ENCODE measurements at regions of chr19 and their contacts with region 1.

Region 1: GRCh38 chr19:36876993-36877938 is 26.6 kb downstream of the ZNF345 start:
- DNase-seq: no peak
- ATAC-seq: no peak
- H3K4me3 ChIP-seq: no peak overlapping the region
- H3K27ac ChIP-seq: no peak overlapping the region
- H3K4me1 ChIP-seq: no peaks in the 10 kb centered on the region
- H3K27me3 ChIP-seq: no peaks in the 10 kb centered on the region
- CTCF ChIP-seq: no peak
- POLR2A ChIP-seq: no peak

Region 2: GRCh38 chr19:36638862-36639510 is 238.3 kb before region 1 on chr19:
- intact Hi-C with region 1: loop called in 2 of 10 experiments (anchors 10 kb)
- DNase-seq: no peak
- ATAC-seq: no peak
- H3K4me3 ChIP-seq: no peak overlapping the region
- H3K27ac ChIP-seq: no peak overlapping the region
- H3K4me1 ChIP-seq: no peaks in the 10 kb centered on the region
- H3K27me3 ChIP-seq: no peaks in the 10 kb centered on the region
- CTCF ChIP-seq: no peak
- POLR2A ChIP-seq: no peak

Region 3: GRCh38 chr19:36646746-36647145 is 230.5 kb before region 1 on chr19:
- intact Hi-C with region 1: loop called in 1 of 10 experiments (anchors 10 kb)
- DNase-seq: no peak
- ATAC-seq: no peak
- H3K4me3 ChIP-seq: no peak overlapping the region
- H3K27ac ChIP-seq: no peak overlapping the region
- H3K4me1 ChIP-seq: no peaks in the 10 kb centered on the region
- H3K27me3 ChIP-seq: no peaks in the 10 kb centered on the region
- CTCF ChIP-seq: no peak
- POLR2A ChIP-seq: no peak

Region 4: DNA sequence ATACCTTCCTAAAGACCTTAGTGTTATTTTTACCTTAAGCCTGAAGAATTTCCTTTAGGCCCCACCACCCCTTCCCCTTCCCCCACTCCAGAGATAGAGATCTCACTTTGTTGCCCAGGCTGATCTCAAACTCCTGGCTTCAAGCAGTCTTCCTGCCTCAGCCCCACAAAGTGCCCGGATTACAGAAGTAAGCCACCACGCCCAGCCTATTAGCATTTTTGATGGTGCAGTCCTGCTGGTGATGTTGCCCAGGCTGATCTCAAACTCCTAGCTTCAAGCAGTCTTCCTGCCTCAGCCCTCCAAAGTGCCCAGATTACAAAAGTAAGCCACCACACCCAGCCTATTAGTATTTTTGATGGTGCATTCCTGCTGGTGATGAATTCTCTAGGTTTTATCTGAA is 167.8 kb before region 1 on chr19:
- intact Hi-C with region 1: no loop called
- DNase-seq: no peak
- ATAC-seq: no peak
- H3K4me3 ChIP-seq: no peak overlapping the region
- H3K27ac ChIP-seq: no peak overlapping the region
- H3K4me1 ChIP-seq: no peaks in the 10 kb centered on the region
- H3K27me3 ChIP-seq: no peaks in the 10 kb centered on the region
- CTCF ChIP-seq: no peak
- POLR2A ChIP-seq: no peak

Region 5: GRCh38 chr19:36719687-36720556 is 157.3 kb before region 1 on chr19:
- intact Hi-C with region 1: loop called in 1 of 10 experiments (anchors 10 kb)
- DNase-seq: no peak
- ATAC-seq: no peak
- H3K4me3 ChIP-seq: no peak overlapping the region
- H3K27ac ChIP-seq: no peak overlapping the region
- H3K4me1 ChIP-seq: no peaks in the 10 kb centered on the region
- H3K27me3 ChIP-seq: no peaks in the 10 kb centered on the region
- CTCF ChIP-seq: no peak
- POLR2A ChIP-seq: no peak

Region 6: GRCh38 chr19:36745870-36746269 is 131.4 kb before region 1 on chr19:
- intact Hi-C with region 1: loop called in 3 of 10 experiments (anchors 10 kb)
- DNase-seq: no peak
- ATAC-seq: no peak
- H3K4me3 ChIP-seq: no peak overlapping the region
- H3K27ac ChIP-seq: no peak overlapping the region
- H3K4me1 ChIP-seq: no peaks in the 10 kb centered on the region
- H3K27me3 ChIP-seq: no peaks in the 10 kb centered on the region
- CTCF ChIP-seq: no peak
- POLR2A ChIP-seq: no peak

Region 7: GRCh38 chr19:36915992-36916830 is 38.9 kb after region 1 on chr19 and contains the starts of genes ZNF568 and ZNF829:
- intact Hi-C with region 1: no loop called
- DNase-seq: peak; percentile 91 to 95 (median 93)
- ATAC-seq: peak; percentile 94 to 99 (median 98)
- H3K4me3 ChIP-seq: peak within 1 kb of the TSS; percentile 60 to 87 (median 80)
- H3K27ac ChIP-seq: peak within 1 kb of the TSS; percentile 80 to 98 (median 97)
- H3K4me1 ChIP-seq: peaks cover 0 to 18% (median 11%) of the 10 kb centered on the region in 12 donors
- H3K27me3 ChIP-seq: no peaks in the 10 kb centered on the region
- CTCF ChIP-seq: peak; percentile 44 to 85 (median 61)
- POLR2A ChIP-seq: no peak
- total RNA-seq, gene ZNF568: 6.6 to 12.1 (median 9.4) TPM
- total RNA-seq, gene ZNF829: 1.3 to 3.5 (median 2.5) TPM

Region 8: GRCh38 chr19:37564624-37565369 is 687.5 kb after region 1 on chr19:
- intact Hi-C with region 1: loop called in 1 of 10 experiments (anchors 10 kb)
- DNase-seq: no peak
- ATAC-seq: no peak
- H3K4me3 ChIP-seq: no peak overlapping the region
- H3K27ac ChIP-seq: no peak overlapping the region
- H3K4me1 ChIP-seq: no peaks in the 10 kb centered on the region
- H3K27me3 ChIP-seq: no peaks in the 10 kb centered on the region
- CTCF ChIP-seq: no peak
- POLR2A ChIP-seq: no peak